ENCODE measurements at regions of chr6 and their contacts with region 1.

Region 1: DNA sequence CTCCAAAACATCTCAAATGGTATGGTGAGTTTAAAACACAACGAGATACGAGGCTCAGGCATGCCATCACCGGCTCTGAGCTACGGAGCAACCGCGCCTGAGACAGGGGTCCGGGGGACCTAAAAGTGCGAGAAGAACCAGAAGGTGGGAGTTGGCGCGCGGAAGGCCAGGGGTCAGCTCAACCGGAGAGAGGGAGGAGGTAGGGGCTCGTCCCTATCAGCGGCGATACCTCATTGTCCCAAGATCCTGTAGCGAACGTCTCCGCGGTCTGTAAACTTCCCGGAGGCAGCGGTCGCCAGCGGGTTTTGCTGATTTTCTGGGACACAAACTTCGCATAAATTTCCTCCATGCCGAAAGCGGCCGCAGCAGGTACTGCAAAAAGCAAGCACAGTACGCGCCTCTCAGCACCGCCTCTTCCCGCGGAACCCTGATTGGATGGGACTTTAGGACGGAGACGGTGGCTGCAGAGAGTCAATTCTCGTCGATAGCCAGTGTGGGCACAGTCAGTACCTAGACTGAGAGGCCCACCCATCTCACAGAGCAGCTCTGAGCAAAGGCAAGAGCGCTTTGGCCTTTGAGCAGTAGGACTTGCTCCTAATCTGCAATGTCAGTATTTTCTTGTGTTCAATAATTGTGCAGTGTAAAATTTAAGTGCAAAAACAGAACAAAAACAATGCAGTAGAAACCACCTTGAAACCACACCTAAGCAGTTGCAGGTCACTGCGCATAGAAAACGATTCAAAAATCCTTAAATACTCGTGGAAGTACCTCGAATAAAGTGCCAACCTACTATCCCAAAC is at the start of gene NUP43:
- DNase-seq: peak; percentile 89
- CTCF ChIP-seq: no peak

Region 2: GRCh38 chr6:149733089-149733720 is 13.1 kb before region 1 on chr6:
- CTCF ChIA-PET with region 1: interaction called, 10 read pairs
- POLR2A ChIA-PET with region 1: no interaction called
- DNase-seq: no peak
- CTCF ChIP-seq: no peak

Measured in GM10248 (cell line).